Left ventricle myocardium inferior (tissue), 1 donor: ENCODE measurements at regions of chr1 and their contacts with region 1.

Region 1: DNA sequence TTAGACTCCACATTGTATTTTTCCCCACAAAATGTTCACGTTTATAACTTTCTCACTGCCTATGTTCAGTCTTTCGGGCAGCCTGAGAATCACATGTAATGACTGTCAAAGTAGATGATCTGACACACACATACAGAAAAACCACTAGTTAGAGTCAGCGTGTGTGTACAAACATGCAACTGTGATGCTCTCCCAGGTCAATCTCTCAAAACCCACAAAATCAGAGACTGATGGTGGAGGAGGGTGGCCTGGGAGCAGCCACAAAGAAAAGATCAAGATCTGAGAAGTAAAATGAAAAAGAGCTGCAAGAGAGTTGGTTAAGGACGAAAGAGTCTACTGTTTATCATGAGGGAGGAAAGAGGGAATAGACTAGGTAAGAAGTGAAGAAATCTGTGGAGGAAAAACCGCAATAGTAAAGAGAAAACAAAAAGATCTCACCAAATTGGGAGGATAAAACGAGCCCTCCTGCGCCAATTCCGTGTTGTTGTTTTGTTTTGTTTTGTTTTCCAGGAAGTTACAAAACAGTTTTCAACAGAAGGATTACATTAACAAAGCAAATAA is 2.3 kb downstream of the EGLN1 start:
- DNase-seq: no peak
- H3K4me3 ChIP-seq: peak overlapping the region; percentile 85
- H3K27ac ChIP-seq: peak overlapping the region; percentile 100
- H3K4me1 ChIP-seq: peaks cover 91% of the 10 kb centered on the region
- H3K27me3 ChIP-seq: no peaks in the 10 kb centered on the region
- CTCF ChIP-seq: no peak

Region 2: GRCh38 chr1:231369282-231369681 is 50.5 kb before region 1 on chr1:
- intact Hi-C with region 1: loop called (anchors 10 kb)
- DNase-seq: no peak
- H3K4me3 ChIP-seq: no peak overlapping the region
- H3K27ac ChIP-seq: no peak overlapping the region
- H3K4me1 ChIP-seq: peaks cover 8% of the 10 kb centered on the region
- H3K27me3 ChIP-seq: no peaks in the 10 kb centered on the region
- CTCF ChIP-seq: no peak

Region 3: DNA sequence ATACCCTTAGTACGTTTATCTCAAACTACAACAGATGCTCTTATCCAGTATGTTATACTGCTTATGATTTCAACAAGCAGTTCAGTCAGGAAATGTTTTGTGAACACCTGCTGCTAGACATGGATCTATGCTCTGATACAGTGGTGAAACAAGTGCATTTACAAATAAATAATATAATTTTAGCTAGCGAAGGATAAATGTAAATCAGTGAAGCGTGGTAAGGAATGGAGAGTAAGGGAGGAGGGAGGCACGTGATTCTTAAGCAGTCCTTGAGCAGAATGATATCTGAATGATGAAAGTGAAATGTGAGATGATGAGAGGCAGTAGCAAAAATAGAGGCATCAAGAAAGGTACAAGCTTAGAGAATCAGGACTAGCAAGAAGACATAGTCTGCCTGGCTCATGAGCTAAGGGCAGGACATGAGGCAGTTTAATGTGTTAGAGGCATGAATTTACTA is 114.9 kb after region 1 on chr1:
- intact Hi-C with region 1: loop called (anchors 10 kb)
- DNase-seq: no peak
- H3K4me3 ChIP-seq: no peak overlapping the region
- H3K27ac ChIP-seq: peak overlapping the region; percentile 13
- H3K4me1 ChIP-seq: peaks cover 71% of the 10 kb centered on the region
- H3K27me3 ChIP-seq: no peaks in the 10 kb centered on the region
- CTCF ChIP-seq: no peak